Naive thymus-derived CD8-positive, alpha-beta T cell (primary cell): ENCODE measurements at regions of chr7 and their contacts with region 1.

Region 1: DNA sequence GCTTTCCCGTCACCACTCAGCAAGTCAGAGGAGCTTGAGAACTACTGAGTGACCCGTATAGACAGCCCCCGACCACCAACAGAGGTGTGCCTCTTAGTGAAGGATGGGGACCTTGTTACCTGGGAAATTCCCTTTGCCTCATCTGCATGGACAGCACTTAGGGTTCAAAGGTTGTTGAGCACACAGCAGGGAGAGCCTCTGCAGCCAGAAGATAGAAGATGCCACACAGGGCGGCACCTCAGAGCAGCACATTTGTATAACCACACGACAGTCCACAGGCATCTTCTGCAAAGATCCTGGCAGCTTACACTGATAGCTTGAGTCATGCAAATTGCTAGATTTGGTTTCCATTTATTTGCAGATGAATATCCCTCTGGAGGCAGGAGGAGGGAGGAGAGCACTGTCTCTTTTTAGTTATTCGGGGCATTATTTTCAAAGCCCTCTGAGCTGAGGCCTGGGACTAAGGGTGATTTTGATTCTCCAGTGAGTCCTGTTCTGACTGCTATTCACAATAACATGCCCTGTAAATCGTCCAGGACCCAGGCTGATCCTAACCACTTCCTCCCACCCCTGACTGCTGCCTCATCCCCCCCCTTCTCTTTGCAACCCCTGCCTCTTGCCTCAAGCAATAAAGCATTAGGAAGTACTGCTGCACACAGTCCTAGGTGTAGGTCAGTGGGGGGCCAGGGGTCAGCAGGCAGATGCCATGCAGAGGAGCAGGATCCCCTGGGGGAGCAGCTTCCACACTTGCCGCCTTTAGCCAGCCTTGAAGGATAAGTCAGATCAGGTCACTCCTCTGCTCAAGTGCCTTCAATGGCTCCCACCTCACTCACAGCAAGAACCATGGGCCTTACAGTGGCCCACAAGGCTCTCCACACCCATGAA is 24.6 kb upstream of the INMT start:
- DNase-seq: peak; percentile 22 to 84 (median 59)
- ATAC-seq: peak; percentile 93
- H3K4me3 Mint-ChIP-seq: peak overlapping the region; percentile 83 to 91 (median 89)
- H3K27ac Mint-ChIP-seq: peak overlapping the region; percentile 80 to 96 (median 94)
- H3K4me1 Mint-ChIP-seq: peaks cover 46 to 87% (median 70%) of the 10 kb centered on the region in 4 donors
- H3K27me3 Mint-ChIP-seq: no peaks in the 10 kb centered on the region

Region 2: GRCh38 chr7:30612658-30613265 is 114.5 kb before region 1 on chr7:
- POLR2A ChIA-PET with region 1: no interaction called
- DNase-seq: no peak
- ATAC-seq: no peak
- H3K4me3 Mint-ChIP-seq: no peak overlapping the region
- H3K27ac Mint-ChIP-seq: peak overlapping the region in 4 of 10 donors; percentile 12 to 69 (median 42)
- H3K4me1 Mint-ChIP-seq: peaks cover 0 to 23% (median 7%) of the 10 kb centered on the region in 4 donors
- H3K27me3 Mint-ChIP-seq: no peaks in the 10 kb centered on the region

Region 3: GRCh38 chr7:30682212-30683083 is 44.9 kb before region 1 on chr7 and contains the start of gene CRHR2:
- POLR2A ChIA-PET with region 1: interaction called, 10 read pairs
- DNase-seq: peak in 9 of 10 donors; percentile 11 to 58 (median 44)
- ATAC-seq: peak; percentile 90 to 92
- H3K4me3 Mint-ChIP-seq: peak within 1 kb of the TSS; percentile 77 to 90 (median 82)
- H3K27ac Mint-ChIP-seq: peak within 1 kb of the TSS in 6 of 10 donors; percentile 36 to 77 (median 54)
- H3K4me1 Mint-ChIP-seq: peaks cover 8 to 30% (median 13%) of the 10 kb centered on the region in 4 donors
- H3K27me3 Mint-ChIP-seq: peaks cover 34 to 77% (median 56%) of the 10 kb centered on the region in 5 donors
- polyA plus RNA-seq, gene CRHR2: 0.06 TPM in 1 of 3 donors, not detected in the others